ENCODE measurements at regions of chr11 and their contacts with region 1.

Region 1: GRCh38 chr11:124875943-124876817 is 10.9 kb downstream of the ROBO3 start:
- DNase-seq: peak; percentile 86
- ATAC-seq: peak; percentile 95
- H3K4me3 Mint-ChIP-seq: peak overlapping the region; percentile 84
- H3K27ac Mint-ChIP-seq: peak overlapping the region; percentile 93
- H3K4me1 Mint-ChIP-seq: peaks cover 24% of the 10 kb centered on the region
- H3K27me3 Mint-ChIP-seq: peaks cover 41% of the 10 kb centered on the region

Region 2: GRCh38 chr11:124315052-124315451 is 561.1 kb before region 1 on chr11:
- CTCF ChIA-PET with region 1: no interaction called
- POLR2A ChIA-PET with region 1: no interaction called
- DNase-seq: no peak
- ATAC-seq: no peak
- H3K4me3 Mint-ChIP-seq: no peak overlapping the region
- H3K27ac Mint-ChIP-seq: no peak overlapping the region
- H3K4me1 Mint-ChIP-seq: no peaks in the 10 kb centered on the region
- H3K27me3 Mint-ChIP-seq: peaks cover 2% of the 10 kb centered on the region

Region 3: GRCh38 chr11:124865921-124866583 is 10.1 kb before region 1 on chr11:
- CTCF ChIA-PET with region 1: interaction called, 13 read pairs
- POLR2A ChIA-PET with region 1: interaction called, 4 read pairs
- DNase-seq: peak; percentile 60
- ATAC-seq: peak; percentile 57
- H3K4me3 Mint-ChIP-seq: no peak overlapping the region
- H3K27ac Mint-ChIP-seq: no peak overlapping the region
- H3K4me1 Mint-ChIP-seq: peaks cover 21% of the 10 kb centered on the region
- H3K27me3 Mint-ChIP-seq: peaks cover 89% of the 10 kb centered on the region

Region 4: GRCh38 chr11:124891373-124891861 is 15.2 kb after region 1 on chr11:
- CTCF ChIA-PET with region 1: interaction called, 16 read pairs
- POLR2A ChIA-PET with region 1: no interaction called
- DNase-seq: no peak
- ATAC-seq: no peak
- H3K4me3 Mint-ChIP-seq: no peak overlapping the region
- H3K27ac Mint-ChIP-seq: no peak overlapping the region
- H3K4me1 Mint-ChIP-seq: no peaks in the 10 kb centered on the region
- H3K27me3 Mint-ChIP-seq: peaks cover 14% of the 10 kb centered on the region

Region 5: DNA sequence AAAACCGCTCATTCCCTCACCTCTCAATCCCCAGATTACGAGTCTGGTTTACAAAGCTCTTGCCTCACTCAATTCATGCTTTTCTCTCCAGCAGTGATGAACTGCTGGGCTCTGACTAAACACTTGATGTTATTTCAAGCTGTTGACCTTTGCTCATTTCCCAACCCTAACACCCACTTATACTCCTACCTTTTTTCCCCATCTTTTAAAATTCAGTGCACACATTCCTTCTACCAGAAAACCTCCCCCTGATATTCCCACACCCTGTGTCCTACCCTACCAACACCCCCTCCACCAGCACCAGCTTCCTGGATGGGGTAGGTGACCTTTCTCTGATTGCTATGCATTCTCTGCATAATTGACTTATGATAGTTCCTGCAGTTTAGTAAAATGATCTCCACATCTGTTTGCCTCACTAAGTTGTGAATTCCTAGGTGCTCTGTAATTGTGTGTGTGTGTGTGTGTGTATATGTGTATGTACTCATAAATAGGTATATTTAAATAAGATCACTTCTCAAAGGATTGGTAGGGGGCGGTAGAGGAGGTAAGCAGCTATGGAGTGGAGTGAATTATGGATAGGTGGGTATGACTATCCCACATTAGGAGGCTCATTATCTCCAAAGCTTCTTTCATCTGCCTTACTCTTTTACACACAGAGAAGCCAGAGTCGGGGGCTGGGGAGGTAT is 58.8 kb after region 1 on chr11:
- CTCF ChIA-PET with region 1: interaction called, 10 read pairs
- POLR2A ChIA-PET with region 1: no interaction called
- DNase-seq: no peak
- ATAC-seq: no peak
- H3K4me3 Mint-ChIP-seq: no peak overlapping the region
- H3K27ac Mint-ChIP-seq: no peak overlapping the region
- H3K4me1 Mint-ChIP-seq: peaks cover 12% of the 10 kb centered on the region
- H3K27me3 Mint-ChIP-seq: peaks cover 10% of the 10 kb centered on the region

Region 6: GRCh38 chr11:125020342-125020741 is 144.2 kb after region 1 on chr11:
- CTCF ChIA-PET with region 1: no interaction called
- POLR2A ChIA-PET with region 1: no interaction called
- DNase-seq: no peak
- ATAC-seq: no peak
- H3K4me3 Mint-ChIP-seq: no peak overlapping the region
- H3K27ac Mint-ChIP-seq: no peak overlapping the region
- H3K4me1 Mint-ChIP-seq: no peaks in the 10 kb centered on the region
- H3K27me3 Mint-ChIP-seq: no peaks in the 10 kb centered on the region

Measured in activated CD8-positive, alpha-beta T cell treated with anti-CD3 and anti-CD28 coated beads, Interleukin-2, amount 10 ng/mL, durations not matched to agents 7 days and 5 days (primary cell).